PC-3 (cell line): ENCODE measurements at regions of chr6 and their contacts with region 1.

Region 1: DNA sequence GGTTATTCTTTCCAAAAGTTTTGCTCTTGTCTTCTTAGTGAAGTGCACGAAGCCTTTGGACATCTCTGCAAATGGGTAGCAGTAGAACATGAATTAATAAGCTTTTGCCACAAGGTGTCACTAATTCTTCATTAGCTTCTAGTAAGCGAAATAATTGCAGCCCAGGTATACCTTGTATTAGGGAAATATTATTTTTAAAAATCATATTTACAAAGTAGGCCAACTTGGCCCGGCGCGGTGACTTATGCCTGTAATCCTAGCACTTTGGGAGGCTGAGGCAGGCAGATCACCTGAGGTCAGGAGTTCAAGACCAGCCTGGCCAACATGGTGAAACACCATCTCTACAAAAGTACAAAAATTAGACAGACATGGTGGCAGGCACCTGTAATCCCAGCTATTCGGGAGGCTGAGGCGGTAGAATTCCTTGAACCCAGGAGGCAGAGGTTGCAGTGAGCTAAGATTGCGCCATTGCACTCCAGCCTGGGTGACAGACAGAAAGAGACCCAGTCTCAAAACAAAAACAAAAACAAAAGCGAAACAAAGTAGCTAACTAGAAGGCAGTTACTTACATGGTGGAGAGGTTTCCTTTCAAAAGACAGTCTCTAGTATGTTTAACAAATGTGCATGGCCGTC is 8.8 kb upstream of the RSPH3 start:
- DNase-seq: peak; percentile 54
- ATAC-seq: peak; percentile 64
- H3K4me3 ChIP-seq: no peak overlapping the region
- H3K27ac ChIP-seq: no peak overlapping the region
- H3K4me1 ChIP-seq: no peaks in the 10 kb centered on the region
- H3K27me3 ChIP-seq: no peaks in the 10 kb centered on the region
- CTCF ChIP-seq: peak; percentile 58

Region 2: DNA sequence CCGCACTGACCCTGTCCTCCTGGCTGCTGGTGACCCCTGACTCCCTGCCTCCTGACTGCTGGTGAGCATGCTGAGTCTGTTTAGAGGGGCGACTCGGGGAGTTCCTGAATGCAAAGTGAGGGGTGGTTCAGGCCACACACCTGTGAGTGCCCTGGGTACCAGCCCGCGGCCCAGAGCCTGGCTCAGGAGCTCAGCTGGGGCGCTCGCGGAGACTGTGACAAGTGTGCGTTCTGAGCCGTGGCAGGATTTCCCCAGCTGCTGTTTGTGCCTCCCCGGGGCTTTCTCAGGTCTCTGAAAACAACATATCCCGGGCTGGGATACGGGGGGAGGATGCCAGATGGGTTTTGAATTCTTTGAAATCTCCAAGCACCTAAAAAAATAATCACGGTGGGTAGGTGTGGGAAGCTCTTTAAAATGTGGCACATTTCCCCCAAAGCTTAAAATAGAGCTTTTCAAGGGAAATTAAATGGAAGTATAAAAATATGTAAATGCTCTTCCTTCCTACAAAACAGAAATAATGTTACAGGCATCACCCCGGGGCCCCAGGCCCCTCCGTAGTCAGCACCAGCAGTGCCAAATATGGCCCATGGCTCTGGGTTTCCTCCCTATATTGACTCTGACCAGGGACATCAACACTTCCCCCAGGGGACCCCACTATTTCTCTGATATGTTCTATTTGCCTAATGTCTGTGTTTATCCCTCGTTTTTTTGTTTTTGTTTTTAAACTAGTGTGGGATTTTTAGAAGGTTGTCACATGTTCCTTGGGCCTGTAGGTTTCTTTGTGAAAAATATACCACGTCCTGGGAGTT is 85.9 kb after region 1 on chr6:
- CTCF ChIA-PET with region 1: no interaction called
- POLR2A ChIA-PET with region 1: no interaction called
- intact Hi-C with region 1: no loop called
- DNase-seq: no peak
- ATAC-seq: no peak
- H3K4me3 ChIP-seq: no peak overlapping the region
- H3K27ac ChIP-seq: no peak overlapping the region
- H3K4me1 ChIP-seq: no peaks in the 10 kb centered on the region
- H3K27me3 ChIP-seq: peaks cover 19% of the 10 kb centered on the region
- CTCF ChIP-seq: no peak

Region 3: DNA sequence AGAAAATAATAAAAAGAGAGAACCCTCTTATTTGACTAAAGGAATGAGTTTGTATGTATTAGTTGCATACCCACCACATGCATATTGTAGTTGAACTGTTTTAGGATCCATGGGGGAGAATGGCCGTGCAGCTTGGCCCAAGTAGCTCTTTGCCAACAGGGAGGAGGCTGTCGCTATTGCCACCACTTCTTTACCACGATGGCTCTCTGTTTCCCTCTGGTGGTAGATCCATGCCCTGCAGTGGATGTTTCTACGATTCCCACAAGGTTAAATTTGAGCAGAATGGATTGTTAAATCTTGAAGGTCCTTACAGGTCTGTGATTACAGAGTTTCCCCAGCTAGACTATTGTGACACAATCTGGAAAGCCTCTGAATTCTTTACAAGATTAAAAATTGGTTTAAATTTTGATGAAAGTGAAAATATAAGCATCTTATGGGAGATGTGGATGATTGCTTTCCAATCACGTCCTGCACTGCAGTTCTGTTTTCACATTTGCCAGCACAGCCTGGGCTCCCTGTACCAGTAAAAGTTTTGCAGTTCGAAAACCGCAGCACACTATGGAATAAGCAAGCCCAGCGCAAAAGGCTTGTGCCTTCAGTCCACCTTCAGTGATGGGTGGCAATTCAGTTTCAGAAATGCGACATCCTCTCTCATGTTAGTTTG is 126.1 kb after region 1 on chr6:
- CTCF ChIA-PET with region 1: interaction called, 14 read pairs
- POLR2A ChIA-PET with region 1: no interaction called
- intact Hi-C with region 1: loop called (anchors 1 kb)
- DNase-seq: peak; percentile 73
- ATAC-seq: peak; percentile 72
- H3K4me3 ChIP-seq: no peak overlapping the region
- H3K27ac ChIP-seq: no peak overlapping the region
- H3K4me1 ChIP-seq: no peaks in the 10 kb centered on the region
- H3K27me3 ChIP-seq: peaks cover 44% of the 10 kb centered on the region
- CTCF ChIP-seq: peak; percentile 86